ENCODE measurements at regions of chr7 and their contacts with region 1.

Region 1: GRCh38 chr7:23013715-23014649 is at the start of gene HYCC1:
- DNase-seq: peak; percentile 98
- H3K4me3 ChIP-seq: peak within 1 kb of the TSS; percentile 72 to 99 (median 91)
- H3K27ac ChIP-seq: peak within 1 kb of the TSS; percentile 86
- H3K4me1 ChIP-seq: peaks cover 25% of the 10 kb centered on the region
- H3K27me3 ChIP-seq: no peaks in the 10 kb centered on the region
- CTCF ChIP-seq: peak; percentile 24 to 65
- total RNA-seq, gene HYCC1: 40.5 to 72.5 TPM

Region 2: GRCh38 chr7:22278660-22279059 is 735.3 kb before region 1 on chr7:
- CTCF ChIA-PET with region 1: no interaction called
- dilution Hi-C with region 1: no loop called
- in situ Hi-C with region 1: no loop called
- intact Hi-C with region 1: no loop called
- DNase-seq: no peak
- H3K4me3 ChIP-seq: no peak overlapping the region
- H3K27ac ChIP-seq: no peak overlapping the region
- H3K4me1 ChIP-seq: no peaks in the 10 kb centered on the region
- H3K27me3 ChIP-seq: no peaks in the 10 kb centered on the region
- CTCF ChIP-seq: no peak

Region 3: GRCh38 chr7:22712999-22713398 is 301.0 kb before region 1 on chr7:
- CTCF ChIA-PET with region 1: no interaction called
- dilution Hi-C with region 1: no loop called
- in situ Hi-C with region 1: no loop called
- intact Hi-C with region 1: no loop called
- DNase-seq: no peak
- H3K4me3 ChIP-seq: no peak overlapping the region
- H3K27ac ChIP-seq: no peak overlapping the region
- H3K4me1 ChIP-seq: peaks cover 7% of the 10 kb centered on the region
- H3K27me3 ChIP-seq: no peaks in the 10 kb centered on the region
- CTCF ChIP-seq: no peak

Region 4: DNA sequence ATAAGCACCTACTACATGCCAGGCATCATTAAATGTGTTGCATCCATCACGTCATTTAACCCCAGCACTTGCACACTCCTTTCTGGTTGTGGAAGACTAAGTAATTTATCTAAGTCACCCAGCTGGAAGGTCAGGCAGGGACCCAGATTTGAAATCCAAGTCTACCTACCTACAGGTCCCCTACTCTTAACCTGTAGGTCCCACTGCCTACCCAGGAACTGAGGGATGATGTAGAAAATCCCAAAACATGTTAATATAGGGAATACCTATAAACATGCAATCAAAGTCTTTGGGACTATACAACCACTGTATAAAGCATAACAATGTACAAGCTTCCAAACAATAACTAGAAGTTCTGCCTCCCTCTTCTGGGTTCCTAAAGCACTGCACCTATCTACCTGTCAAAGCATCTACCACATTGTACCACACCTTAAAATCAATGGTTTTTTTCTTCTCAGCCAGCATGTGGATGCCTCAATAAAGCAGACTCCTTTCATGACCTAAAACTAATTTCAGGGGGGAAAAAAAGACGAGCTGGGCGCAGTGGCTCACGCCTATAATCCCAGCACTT is 281.3 kb before region 1 on chr7:
- CTCF ChIA-PET with region 1: interaction called, 12 read pairs
- dilution Hi-C with region 1: no loop called
- in situ Hi-C with region 1: no loop called
- intact Hi-C with region 1: no loop called
- DNase-seq: peak; percentile 60
- H3K4me3 ChIP-seq: no peak overlapping the region
- H3K27ac ChIP-seq: no peak overlapping the region
- H3K4me1 ChIP-seq: peaks cover 22% of the 10 kb centered on the region
- H3K27me3 ChIP-seq: no peaks in the 10 kb centered on the region
- CTCF ChIP-seq: peak; percentile 76 to 85

Region 5: DNA sequence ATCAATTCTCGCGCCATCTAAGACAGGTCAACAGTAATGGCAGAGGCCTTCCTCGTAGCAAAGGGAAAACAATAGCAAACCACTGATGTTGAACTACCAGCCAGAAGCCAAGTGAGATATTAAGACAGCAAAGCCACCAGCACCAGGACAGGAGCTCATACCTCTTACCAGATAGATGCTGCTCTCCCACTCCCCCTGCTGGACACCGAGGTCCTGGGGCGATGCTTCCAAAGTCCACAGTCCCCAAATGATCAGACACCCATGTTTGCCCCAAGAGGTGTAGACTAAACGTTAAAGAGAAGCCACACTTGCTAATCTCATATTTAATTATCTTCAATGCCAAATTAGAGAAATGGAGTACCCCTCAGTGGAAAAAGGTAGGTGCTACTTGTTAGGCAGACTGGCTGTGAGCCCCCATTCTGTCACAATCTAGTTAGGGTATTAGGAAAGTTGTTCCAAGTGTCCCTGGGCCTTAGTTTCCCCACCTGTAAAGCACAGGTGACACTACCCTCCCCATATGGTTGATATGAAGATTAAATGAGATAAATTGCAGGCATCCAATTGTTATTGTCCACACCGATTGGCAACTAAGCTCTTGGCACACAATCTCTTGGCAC is 231.3 kb before region 1 on chr7:
- CTCF ChIA-PET with region 1: no interaction called
- dilution Hi-C with region 1: no loop called
- in situ Hi-C with region 1: no loop called
- intact Hi-C with region 1: loop called (anchors 1 kb)
- DNase-seq: peak; percentile 41
- H3K4me3 ChIP-seq: no peak overlapping the region
- H3K27ac ChIP-seq: no peak overlapping the region
- H3K4me1 ChIP-seq: peaks cover 8% of the 10 kb centered on the region
- H3K27me3 ChIP-seq: no peaks in the 10 kb centered on the region
- CTCF ChIP-seq: peak; percentile 88 to 90

Region 6: DNA sequence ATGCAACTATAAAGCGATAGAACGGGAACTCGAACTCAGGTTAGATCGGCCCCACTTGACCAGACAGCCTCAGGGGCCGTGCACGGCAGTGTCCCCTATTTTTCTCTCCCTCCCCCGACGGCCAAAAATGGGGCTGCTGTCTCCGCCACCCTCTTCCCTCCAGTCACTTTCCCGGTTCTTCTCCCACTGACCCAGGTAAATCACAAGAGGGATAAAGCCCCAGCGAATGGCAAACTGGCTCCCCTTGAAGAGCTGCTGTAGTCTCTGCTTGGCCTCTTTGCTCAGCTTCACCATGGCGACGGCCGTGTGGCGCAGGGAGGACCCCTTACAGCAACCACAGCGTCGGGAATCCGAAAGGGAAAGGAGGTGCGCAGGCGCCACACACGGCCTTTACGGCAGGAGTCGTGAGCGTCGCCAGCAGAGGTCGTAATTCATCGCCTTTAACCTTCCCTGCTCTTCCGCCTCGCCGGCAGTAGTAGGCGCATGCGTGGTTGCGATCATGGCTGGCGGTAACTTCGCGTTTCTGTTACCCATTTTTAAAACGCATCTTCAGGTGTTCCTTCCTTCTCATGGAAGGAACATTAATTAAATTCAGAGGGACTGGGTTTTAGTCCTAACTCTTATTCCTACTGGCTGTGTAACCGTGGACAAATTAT is 191.4 kb before region 1 on chr7 and contains the start of gene TOMM7:
- CTCF ChIA-PET with region 1: interaction called, 3 read pairs
- dilution Hi-C with region 1: no loop called
- in situ Hi-C with region 1: no loop called
- intact Hi-C with region 1: loop called (anchors 2 kb)
- DNase-seq: peak; percentile 92
- H3K4me3 ChIP-seq: peak within 1 kb of the TSS; percentile 76 to 93 (median 88)
- H3K27ac ChIP-seq: peak within 1 kb of the TSS; percentile 84
- H3K4me1 ChIP-seq: peaks cover 18% of the 10 kb centered on the region
- H3K27me3 ChIP-seq: no peaks in the 10 kb centered on the region
- CTCF ChIP-seq: peak in 1 of 2 donors; percentile 45
- total RNA-seq, gene TOMM7: 77.5 to 239 TPM

Region 7: GRCh38 chr7:22860784-22861482 is 153.0 kb before region 1 on chr7:
- CTCF ChIA-PET with region 1: no interaction called
- dilution Hi-C with region 1: no loop called
- in situ Hi-C with region 1: no loop called
- intact Hi-C with region 1: loop called (anchors 1 kb)
- DNase-seq: peak; percentile 22
- H3K4me3 ChIP-seq: no peak overlapping the region
- H3K27ac ChIP-seq: peak overlapping the region; percentile 99
- H3K4me1 ChIP-seq: peaks cover 53% of the 10 kb centered on the region
- H3K27me3 ChIP-seq: no peaks in the 10 kb centered on the region
- CTCF ChIP-seq: peak; percentile 51 to 62

Region 8: GRCh38 chr7:22980422-22980821 is 33.6 kb before region 1 on chr7:
- CTCF ChIA-PET with region 1: no interaction called
- dilution Hi-C with region 1: no loop called
- in situ Hi-C with region 1: no loop called
- intact Hi-C with region 1: loop called (anchors 1 kb)
- DNase-seq: peak; percentile 73
- H3K4me3 ChIP-seq: no peak overlapping the region
- H3K27ac ChIP-seq: peak overlapping the region; percentile 89
- H3K4me1 ChIP-seq: peaks cover 21% of the 10 kb centered on the region
- H3K27me3 ChIP-seq: no peaks in the 10 kb centered on the region
- CTCF ChIP-seq: no peak

Region 9: GRCh38 chr7:23055582-23056178 is 41.7 kb after region 1 on chr7:
- CTCF ChIA-PET with region 1: no interaction called
- dilution Hi-C with region 1: no loop called
- in situ Hi-C with region 1: no loop called
- intact Hi-C with region 1: loop called (anchors 1 kb)
- DNase-seq: peak; percentile 57
- H3K4me3 ChIP-seq: no peak overlapping the region
- H3K27ac ChIP-seq: no peak overlapping the region
- H3K4me1 ChIP-seq: peaks cover 2% of the 10 kb centered on the region
- H3K27me3 ChIP-seq: no peaks in the 10 kb centered on the region
- CTCF ChIP-seq: peak; percentile 94 to 95

Region 10: GRCh38 chr7:23175938-23176337 is 162.0 kb after region 1 on chr7:
- CTCF ChIA-PET with region 1: no interaction called
- dilution Hi-C with region 1: no loop called
- in situ Hi-C with region 1: no loop called
- intact Hi-C with region 1: no loop called
- DNase-seq: no peak
- H3K4me3 ChIP-seq: no peak overlapping the region
- H3K27ac ChIP-seq: no peak overlapping the region
- H3K4me1 ChIP-seq: no peaks in the 10 kb centered on the region
- H3K27me3 ChIP-seq: no peaks in the 10 kb centered on the region
- CTCF ChIP-seq: no peak

Region 11: GRCh38 chr7:23431702-23432199 is 417.8 kb after region 1 on chr7:
- CTCF ChIA-PET with region 1: no interaction called
- dilution Hi-C with region 1: no loop called
- in situ Hi-C with region 1: no loop called
- intact Hi-C with region 1: no loop called
- DNase-seq: no peak
- H3K4me3 ChIP-seq: no peak overlapping the region
- H3K27ac ChIP-seq: peak overlapping the region; percentile 43
- H3K4me1 ChIP-seq: peaks cover 12% of the 10 kb centered on the region
- H3K27me3 ChIP-seq: no peaks in the 10 kb centered on the region
- CTCF ChIP-seq: no peak